Activated CD4-positive, alpha-beta memory T cell treated with anti-CD3 and anti-CD28 coated beads, Interleukin-2, amount 10 ng/mL, durations not matched to agents 7 days and 5 days (primary cell): ENCODE measurements at regions of chr5 and their contacts with region 1.

Region 1: DNA sequence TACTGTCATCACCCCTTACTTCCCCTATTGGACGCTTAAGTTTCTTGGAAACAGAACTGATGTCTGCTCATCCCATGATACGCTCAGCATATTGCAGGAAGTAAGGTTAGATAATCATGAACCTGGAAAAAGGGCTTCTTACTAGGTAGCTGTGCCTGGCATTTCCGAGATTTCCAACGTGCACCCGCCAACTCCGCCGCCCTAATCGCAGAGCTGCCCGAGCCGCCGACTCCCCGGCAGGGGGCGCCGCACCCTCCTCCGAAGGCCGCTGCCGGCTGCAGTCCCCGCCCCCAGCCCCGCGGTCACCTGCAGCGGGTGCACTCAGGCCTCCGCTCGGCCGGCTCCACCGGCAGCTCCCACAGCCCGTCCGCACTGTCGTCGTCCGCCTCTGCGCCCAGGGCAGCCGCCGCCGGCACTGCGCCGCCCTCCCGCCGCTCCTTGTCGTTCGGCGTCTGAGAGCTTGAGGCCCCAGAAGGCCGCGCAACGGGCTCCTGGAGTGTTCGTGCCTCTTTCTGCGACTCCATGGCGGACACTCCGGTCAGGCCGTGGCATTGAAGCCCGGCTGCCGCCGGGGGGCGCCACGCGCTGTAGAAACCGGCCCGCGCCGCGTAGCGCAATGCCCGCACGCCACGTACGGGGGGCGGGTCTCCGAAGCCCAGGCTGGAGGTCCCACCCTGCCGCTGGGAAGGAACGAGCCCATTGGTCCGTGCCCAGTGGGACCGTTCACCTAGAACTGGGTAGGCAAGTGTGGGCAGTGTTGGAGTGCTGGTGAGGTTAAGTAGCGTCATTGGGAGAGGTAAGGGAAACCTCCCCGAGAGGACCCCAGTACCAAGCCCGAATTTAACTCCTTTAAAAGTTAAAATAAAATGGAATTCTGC is at the start of gene DTWD2:
- DNase-seq: peak; percentile 91
- H3K4me3 Mint-ChIP-seq: peak within 1 kb of the TSS; percentile 70
- H3K27ac Mint-ChIP-seq: peak within 1 kb of the TSS; percentile 21
- H3K4me1 Mint-ChIP-seq: peaks cover 13% of the 10 kb centered on the region
- H3K27me3 Mint-ChIP-seq: no peaks in the 10 kb centered on the region
- total RNA-seq, gene DTWD2: 1.3 to 1.6 TPM

Region 2: DNA sequence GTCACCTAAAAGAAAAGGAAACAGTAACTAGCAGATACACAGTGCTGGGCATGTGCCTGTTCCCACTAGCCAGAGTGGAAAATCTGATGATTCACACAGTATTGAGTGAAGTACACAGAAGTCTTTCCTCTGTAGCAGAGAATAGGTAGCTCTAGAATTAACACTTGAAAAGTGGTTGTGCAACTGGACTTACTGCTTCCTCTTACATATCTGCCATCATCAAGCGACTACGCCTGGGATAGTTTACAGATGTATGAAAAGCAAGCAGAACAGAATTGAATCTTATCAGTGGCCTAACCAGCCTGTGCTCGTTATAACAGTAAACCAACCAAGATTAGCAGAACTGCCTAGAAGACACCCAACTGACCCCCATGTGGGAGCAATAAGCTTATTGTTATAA is 130.5 kb before region 1 on chr5:
- CTCF ChIA-PET with region 1: no interaction called
- POLR2A ChIA-PET with region 1: no interaction called
- DNase-seq: no peak
- H3K4me3 Mint-ChIP-seq: no peak overlapping the region
- H3K27ac Mint-ChIP-seq: no peak overlapping the region
- H3K4me1 Mint-ChIP-seq: no peaks in the 10 kb centered on the region
- H3K27me3 Mint-ChIP-seq: no peaks in the 10 kb centered on the region

Region 3: DNA sequence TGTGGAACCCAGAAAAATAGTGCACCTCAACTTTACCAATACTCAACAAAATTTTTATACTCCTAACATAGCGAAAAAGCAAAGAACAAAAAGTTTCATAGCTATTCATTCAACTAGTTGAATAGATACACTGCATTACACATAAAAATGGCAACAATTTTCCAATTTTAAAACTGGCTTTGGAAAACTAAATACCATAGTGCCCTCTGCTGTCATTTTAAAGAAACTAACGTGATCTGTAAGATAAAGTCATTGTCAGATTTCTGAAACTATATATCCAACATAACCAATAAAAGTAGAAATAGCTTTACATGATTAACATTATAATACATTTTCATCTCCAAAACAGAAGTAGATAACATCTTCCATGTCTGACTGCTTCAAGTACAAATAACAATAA is 31.5 kb before region 1 on chr5:
- CTCF ChIA-PET with region 1: interaction called, 10 read pairs
- POLR2A ChIA-PET with region 1: interaction called, 5 read pairs
- DNase-seq: no peak
- H3K4me3 Mint-ChIP-seq: no peak overlapping the region
- H3K27ac Mint-ChIP-seq: no peak overlapping the region
- H3K4me1 Mint-ChIP-seq: no peaks in the 10 kb centered on the region
- H3K27me3 Mint-ChIP-seq: no peaks in the 10 kb centered on the region

Region 4: DNA sequence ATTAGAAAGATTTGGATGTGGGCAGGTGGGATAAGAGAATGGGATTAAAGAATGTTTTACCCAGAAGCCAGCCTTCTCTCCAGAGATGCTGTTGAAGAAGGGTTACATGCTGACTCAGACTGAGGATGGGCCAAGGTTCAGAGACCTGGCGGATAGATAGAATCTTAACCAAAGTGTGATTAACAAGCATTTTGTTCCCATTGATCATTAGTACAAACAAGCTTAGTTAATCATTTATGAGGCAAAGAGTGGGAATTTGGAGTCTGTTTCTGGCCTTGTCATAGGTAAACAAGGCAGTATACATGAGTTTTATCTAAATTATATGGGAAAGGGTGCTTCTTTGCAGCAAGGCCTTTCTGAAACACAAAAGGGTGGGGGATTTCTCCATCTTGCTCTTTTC is 20.9 kb after region 1 on chr5:
- CTCF ChIA-PET with region 1: interaction called, 10 read pairs
- POLR2A ChIA-PET with region 1: no interaction called
- DNase-seq: no peak
- H3K4me3 Mint-ChIP-seq: no peak overlapping the region
- H3K27ac Mint-ChIP-seq: no peak overlapping the region
- H3K4me1 Mint-ChIP-seq: no peaks in the 10 kb centered on the region
- H3K27me3 Mint-ChIP-seq: no peaks in the 10 kb centered on the region

Region 5: DNA sequence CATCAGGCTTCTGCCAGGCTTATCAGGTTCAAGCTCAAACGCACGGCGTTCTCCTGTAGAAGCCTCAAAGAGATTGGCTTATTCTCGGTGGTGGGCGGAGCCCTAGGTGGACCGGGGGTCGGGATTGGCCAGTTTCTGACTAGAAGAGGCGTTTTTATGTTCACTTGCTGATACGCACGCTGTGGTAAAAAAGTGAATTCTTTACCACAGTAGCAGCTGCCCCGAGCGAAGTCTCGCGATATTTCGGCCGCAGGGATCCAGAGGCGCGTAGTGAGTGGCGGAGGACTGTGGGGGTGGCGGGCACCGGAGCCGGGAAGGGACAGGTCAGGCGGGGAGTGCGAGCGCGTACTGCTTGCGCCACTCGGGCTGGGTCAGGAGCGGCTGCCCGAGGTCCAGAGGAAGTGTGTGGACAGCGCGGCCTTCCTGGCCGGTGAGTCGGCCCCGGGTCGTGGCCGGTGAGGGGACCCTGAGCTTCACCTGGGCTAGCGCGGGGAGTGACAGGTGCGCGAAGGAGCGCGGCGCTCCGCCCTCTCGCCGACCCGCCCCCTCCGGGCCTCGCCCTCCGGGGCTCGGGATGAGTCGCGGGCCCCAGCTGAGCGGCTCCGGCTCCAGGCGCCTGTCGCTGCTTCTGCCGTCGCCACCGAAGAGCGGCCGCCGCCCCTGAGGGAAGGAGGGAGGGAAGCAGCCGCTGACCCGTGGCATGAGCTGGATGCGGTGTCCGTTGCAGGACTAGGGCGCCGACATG is 82.8 kb after region 1 on chr5 and contains the start of gene DMXL1:
- CTCF ChIA-PET with region 1: interaction called, 18 read pairs
- POLR2A ChIA-PET with region 1: interaction called, 11 read pairs
- DNase-seq: peak; percentile 99
- H3K4me3 Mint-ChIP-seq: peak within 1 kb of the TSS; percentile 89
- H3K27ac Mint-ChIP-seq: peak within 1 kb of the TSS; percentile 96
- H3K4me1 Mint-ChIP-seq: peaks cover 41% of the 10 kb centered on the region
- H3K27me3 Mint-ChIP-seq: no peaks in the 10 kb centered on the region
- total RNA-seq, gene DMXL1: 31.5 to 33.0 TPM

Region 6: DNA sequence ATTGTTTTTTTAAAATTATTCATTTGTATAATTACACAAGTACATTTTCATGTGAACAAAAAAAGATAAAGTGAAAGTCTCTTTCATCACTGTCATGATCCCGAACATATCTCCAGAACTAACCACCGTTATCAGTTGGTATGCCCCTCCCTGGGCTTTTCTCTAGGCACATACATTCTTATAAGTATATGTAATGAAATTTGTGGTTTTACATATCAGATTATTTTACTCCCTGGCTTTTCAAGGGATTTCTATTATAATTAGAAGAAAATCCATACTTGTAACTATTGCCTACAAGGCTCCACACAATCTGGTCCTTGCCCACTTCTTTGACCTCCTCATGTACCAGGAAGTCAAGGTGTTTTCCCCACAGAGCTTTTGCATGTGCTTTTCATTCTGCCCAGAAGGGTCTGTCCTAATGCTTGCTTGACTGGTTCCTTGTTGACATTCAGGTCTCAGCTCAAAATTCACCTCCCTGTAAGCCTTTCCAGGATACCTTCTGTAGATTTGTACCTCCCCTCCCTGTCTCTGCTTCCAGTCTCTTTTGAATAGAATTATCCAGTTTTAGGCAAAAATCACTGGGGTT is 430.4 kb after region 1 on chr5:
- CTCF ChIA-PET with region 1: interaction called, 127 read pairs
- POLR2A ChIA-PET with region 1: no interaction called
- DNase-seq: no peak
- H3K4me3 Mint-ChIP-seq: no peak overlapping the region
- H3K27ac Mint-ChIP-seq: no peak overlapping the region
- H3K4me1 Mint-ChIP-seq: peaks cover 13% of the 10 kb centered on the region
- H3K27me3 Mint-ChIP-seq: peaks cover 6% of the 10 kb centered on the region

Region 7: DNA sequence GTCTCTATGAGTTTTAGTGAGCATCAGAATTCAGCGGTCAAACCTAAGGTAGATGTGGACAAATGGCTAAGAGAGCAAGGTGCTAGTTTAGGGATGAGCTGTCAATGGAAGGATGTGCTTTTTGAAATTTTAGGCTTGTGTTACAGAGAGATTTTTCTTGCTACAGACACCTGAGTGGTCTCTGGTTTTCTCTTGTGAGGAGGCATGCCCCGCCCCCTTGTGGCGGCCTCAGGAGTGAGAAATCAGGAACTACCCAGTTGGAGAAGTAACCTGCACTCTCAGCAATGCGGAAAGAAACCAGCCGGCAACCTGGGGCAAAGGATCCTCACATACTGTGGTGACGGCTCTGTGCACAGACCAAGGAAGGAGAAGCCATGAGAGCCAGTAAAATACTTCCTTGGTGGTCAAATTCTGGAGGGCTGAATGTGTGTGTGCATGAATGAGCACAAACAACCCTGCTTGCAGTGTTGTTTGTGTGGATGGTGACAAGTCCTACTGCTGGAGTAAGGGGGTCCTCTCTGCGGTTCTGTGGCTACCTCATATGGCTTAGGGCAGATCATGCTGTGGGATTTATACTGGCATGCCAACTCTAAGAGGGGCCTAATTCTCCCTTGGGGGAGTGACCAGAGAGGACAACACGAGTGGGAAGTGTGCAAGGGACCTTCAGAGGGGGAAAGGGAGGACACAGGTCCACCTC is 447.4 kb after region 1 on chr5:
- CTCF ChIA-PET with region 1: interaction called, 43 read pairs
- POLR2A ChIA-PET with region 1: interaction called, 6 read pairs
- DNase-seq: peak; percentile 71
- H3K4me3 Mint-ChIP-seq: no peak overlapping the region
- H3K27ac Mint-ChIP-seq: no peak overlapping the region
- H3K4me1 Mint-ChIP-seq: peaks cover 18% of the 10 kb centered on the region
- H3K27me3 Mint-ChIP-seq: peaks cover 21% of the 10 kb centered on the region

Region 8: DNA sequence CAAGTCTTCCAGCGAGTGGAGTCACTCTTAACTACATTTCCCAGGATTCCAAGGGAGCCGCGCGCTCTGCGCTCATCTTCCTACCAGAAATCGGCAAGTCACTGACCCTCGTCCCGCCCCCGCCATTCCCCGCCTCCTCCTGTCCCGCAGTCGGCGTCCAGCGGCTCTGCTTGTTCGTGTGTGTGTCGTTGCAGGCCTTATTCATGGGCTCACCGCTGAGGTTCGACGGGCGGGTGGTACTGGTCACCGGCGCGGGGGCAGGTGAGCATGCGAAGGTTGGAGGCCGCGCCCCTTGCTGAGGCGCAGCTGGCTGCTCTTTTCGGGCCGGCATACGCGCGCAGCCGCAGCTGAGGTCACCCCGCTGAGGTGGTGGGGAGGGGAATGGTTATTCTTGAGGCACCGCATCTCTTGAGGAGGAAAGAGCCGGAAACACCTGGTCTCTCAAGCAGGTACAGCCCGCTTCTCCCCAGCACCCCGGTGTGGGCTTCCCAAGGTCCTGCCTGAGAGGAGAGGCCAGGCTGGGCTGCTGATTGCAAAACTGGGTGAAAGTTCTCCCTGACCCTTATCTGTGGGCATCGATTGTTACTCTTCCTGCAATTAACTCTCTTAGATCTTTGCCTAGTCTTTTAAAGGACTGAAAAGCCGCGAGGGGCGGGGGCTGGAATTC is 464.3 kb after region 1 on chr5 and contains the start of gene HSD17B4:
- CTCF ChIA-PET with region 1: interaction called, 11 read pairs
- POLR2A ChIA-PET with region 1: no interaction called
- DNase-seq: peak; percentile 82
- H3K4me3 Mint-ChIP-seq: peak within 1 kb of the TSS; percentile 87
- H3K27ac Mint-ChIP-seq: peak within 1 kb of the TSS; percentile 44
- H3K4me1 Mint-ChIP-seq: peaks cover 20% of the 10 kb centered on the region
- H3K27me3 Mint-ChIP-seq: peaks cover 11% of the 10 kb centered on the region
- total RNA-seq, gene HSD17B4: 57.2 to 59.1 TPM